Dendritic cell treated with granulocyte-macrophage colony-stimulating factor and Interleukin-4, amounts not matched to agents 40 ng/mL and 50 ng/mL, for 4 days (primary cell): ENCODE measurements at regions of chr1 and their contacts with region 1.

Region 1: DNA sequence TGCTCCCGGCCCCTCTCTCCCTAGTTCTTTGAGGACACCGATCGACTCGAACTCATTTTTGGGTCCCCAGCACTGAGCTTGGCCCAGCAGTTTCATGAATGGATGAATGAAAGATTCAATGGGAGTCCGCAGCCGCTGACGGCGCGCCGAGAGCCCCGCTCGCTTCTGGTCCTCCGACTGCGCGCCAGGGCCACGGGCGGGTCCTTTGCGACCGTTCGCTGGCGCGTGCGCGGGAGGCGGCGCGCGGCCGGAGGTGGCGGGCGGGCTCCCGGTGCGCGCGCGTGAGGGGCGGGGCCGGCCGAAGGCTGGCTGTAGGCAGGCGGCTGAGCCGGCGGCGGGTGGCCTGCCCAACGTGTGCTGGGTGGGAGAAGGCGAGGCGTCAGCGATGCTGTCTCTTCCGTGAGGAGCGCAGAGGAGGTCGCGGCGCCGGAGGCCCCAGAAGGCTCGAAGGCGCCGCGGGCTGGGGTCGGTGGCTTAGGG is at the start of gene MAST2:
- H3K4me3 Mint-ChIP-seq: peak within 1 kb of the TSS; percentile 82
- H3K27ac Mint-ChIP-seq: peak within 1 kb of the TSS; percentile 80
- H3K4me1 Mint-ChIP-seq: peaks cover 52% of the 10 kb centered on the region
- H3K27me3 Mint-ChIP-seq: peaks cover 1% of the 10 kb centered on the region

Region 2: DNA sequence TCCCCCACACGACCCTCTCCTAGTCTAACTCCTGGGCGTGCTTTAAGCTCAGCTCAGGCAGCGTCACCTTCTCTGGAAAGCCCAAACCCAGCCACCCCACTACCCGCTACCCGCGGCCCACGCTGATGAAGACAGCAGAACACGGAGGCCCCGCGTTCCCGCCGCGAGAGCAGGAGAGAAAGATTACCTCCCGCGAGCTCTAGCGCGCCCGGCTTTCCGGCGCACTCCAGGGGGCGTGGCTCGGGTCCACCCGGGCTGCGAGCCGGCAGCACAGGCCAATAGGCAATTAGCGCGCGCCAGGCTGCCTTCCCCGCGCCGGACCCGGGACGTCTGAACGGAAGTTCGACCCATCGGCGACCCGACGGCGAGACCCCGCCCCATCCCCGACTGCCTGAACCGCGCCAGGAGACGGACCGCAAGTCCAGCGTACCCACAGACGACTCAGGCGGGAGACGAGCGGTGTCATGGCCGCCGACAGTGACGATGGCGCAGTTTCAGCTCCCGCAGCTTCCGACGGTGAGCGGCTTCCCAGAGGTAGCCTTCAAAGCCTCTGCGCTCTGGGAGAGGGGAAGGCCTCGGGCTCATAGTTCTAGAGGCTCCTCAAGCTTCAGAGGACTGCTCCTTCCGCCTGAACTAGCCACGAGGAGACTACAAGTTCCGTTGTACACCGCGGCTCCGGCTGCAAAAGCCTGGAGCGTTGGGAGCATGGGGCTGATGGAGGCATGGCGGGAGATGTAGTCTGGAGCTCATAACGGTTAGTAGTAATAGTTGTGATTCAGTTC is 463.4 kb before region 1 on chr1 and contains the starts of genes MUTYH and TOE1:
- intact Hi-C with region 1: no loop called
- H3K4me3 Mint-ChIP-seq: peak within 1 kb of the TSS; percentile 89
- H3K27ac Mint-ChIP-seq: peak within 1 kb of the TSS; percentile 95
- H3K4me1 Mint-ChIP-seq: peaks cover 43% of the 10 kb centered on the region
- H3K27me3 Mint-ChIP-seq: no peaks in the 10 kb centered on the region

Region 3: DNA sequence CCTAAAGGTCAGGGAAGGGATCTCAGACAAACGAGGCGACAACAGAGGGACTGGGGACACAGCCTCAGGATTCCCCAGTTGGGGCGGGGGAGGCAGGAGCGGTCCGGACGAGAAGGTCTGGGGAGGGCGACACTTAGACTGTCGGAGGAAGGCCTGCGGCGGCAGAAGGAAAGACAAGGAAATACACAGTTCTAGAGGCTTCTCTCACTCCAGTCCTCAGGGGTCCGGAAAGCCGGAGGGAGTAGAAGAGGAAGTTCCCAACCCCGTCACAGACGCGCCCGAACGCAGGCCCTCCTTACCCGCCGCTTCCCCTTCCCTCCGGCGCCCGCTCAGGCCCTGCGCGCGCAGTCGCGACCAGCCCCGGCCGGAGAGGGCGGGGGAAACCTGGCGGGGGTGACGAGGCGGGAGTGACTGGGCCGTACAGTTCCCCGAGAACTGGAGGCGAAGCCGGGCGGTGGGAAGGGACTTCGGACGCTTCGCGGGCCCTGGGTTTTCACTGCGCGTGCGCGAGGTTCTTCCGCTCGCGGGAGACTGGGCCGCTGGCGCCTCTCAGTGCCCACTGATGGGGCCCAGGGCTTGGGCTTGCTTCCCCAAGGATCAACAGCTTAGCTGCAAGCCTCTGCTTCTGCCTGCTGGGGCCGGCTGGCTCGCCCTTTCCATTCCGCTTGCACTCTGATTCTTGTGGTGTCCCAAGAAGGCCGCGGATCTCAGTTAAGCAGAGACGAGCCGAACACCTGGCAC is 52.9 kb before region 1 on chr1 and contains the start of gene IPP:
- intact Hi-C with region 1: loop called (anchors 5 kb)
- H3K4me3 Mint-ChIP-seq: peak within 1 kb of the TSS; percentile 85
- H3K27ac Mint-ChIP-seq: peak within 1 kb of the TSS; percentile 100
- H3K4me1 Mint-ChIP-seq: peaks cover 19% of the 10 kb centered on the region
- H3K27me3 Mint-ChIP-seq: no peaks in the 10 kb centered on the region

Region 4: DNA sequence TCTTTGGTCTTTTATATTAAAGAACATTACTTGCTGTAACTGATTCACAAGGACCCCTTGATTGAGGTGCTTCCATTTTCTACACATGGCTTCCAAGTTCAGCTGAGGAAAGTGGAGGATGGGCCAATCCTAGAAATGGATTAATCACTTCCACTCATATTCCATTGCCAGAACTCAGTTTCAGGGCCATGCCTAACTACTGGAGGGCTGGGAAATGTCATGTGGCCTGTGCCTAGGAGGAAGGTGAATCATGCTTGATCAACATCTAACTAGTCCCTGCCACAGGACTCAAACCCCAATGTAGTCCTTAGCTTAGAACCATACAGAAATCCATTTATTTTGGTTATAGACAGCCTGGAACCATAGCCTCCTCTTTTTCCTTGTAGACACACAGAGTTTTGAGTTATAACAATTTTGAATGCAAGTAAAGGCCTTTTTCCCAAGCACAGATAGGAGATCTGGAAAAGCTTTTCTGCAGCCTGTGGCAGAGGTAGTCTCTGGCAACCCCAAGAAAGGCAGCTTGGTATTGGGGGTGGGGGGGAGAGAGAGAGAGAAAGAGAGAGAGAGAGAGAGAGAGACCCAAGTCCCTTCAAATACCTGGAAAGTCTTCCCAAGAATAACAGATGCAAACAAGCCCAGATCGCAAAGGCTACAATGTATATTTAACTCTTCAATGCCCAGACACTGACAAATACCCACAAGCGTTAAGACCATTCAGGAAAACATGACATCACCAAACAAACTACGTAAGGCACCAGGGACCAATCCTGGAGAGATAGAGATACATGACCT is 12.5 kb after region 1 on chr1:
- intact Hi-C with region 1: no loop called
- H3K4me3 Mint-ChIP-seq: no peak overlapping the region
- H3K27ac Mint-ChIP-seq: no peak overlapping the region
- H3K4me1 Mint-ChIP-seq: peaks cover 2% of the 10 kb centered on the region
- H3K27me3 Mint-ChIP-seq: no peaks in the 10 kb centered on the region

Region 5: GRCh38 chr1:45840704-45841103 is 37.4 kb after region 1 on chr1:
- intact Hi-C with region 1: no loop called
- H3K4me3 Mint-ChIP-seq: no peak overlapping the region
- H3K27ac Mint-ChIP-seq: no peak overlapping the region
- H3K4me1 Mint-ChIP-seq: peaks cover 9% of the 10 kb centered on the region
- H3K27me3 Mint-ChIP-seq: no peaks in the 10 kb centered on the region

Region 6: DNA sequence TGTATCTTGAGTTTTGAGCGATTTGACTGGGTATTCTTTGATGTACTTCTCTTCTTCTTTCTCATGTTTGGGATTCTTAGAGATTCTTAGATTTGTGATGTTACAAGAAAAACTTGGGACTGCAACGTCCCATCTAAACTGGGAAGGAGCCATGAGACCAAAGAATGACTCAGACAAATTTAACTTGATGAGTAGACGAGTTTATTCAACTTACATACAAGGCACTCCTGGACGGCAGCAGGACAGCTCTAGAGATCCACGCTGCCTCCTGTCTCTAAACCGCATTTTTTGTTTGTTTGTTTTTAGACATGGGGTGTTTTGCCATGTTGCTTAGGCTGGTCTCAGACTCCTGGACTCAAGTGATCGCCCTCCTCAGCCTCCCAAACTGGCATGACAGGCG is 192.0 kb after region 1 on chr1:
- intact Hi-C with region 1: no loop called
- H3K4me3 Mint-ChIP-seq: no peak overlapping the region
- H3K27ac Mint-ChIP-seq: no peak overlapping the region
- H3K4me1 Mint-ChIP-seq: peaks cover 15% of the 10 kb centered on the region
- H3K27me3 Mint-ChIP-seq: no peaks in the 10 kb centered on the region